ENCODE measurements at regions of chr5 and their contacts with region 1.

Region 1: DNA sequence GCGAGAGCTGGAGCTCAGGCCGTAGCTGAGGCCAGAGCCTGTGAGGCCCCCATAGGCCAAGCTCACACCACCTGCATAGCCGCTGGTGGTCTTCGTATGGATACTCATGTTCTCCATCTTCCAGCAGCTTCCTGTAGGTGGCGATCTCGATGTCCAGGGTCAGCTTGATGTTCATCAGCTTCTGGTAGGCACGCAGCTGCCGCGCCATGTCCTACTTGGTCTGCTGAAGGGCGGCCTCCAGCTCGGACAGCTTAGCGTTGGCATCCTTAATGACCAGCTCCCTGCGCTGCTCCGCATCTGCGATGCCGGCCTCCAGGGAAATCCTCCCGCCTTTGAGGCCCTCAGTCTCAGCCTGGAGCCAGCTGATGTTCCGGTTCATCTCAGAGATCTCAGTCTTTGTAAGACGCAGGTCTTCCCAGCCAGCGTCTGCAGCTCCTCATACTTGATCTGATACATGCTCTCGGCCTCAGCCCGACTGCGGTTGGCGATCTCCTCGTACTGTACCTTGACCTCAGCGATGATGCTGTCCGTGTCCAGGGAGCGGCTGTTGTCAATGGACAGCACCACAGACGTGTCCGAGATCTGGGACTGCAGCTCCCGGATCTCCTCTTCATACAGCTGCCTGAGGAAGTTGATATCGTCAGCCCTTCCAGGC is 172.1 kb downstream of the PPP2R2B start:
- DNase-seq: peak; percentile 66
- ATAC-seq: peak; percentile 91
- H3K4me3 Mint-ChIP-seq: no peak overlapping the region
- H3K27ac Mint-ChIP-seq: no peak overlapping the region
- H3K4me1 Mint-ChIP-seq: peaks cover 7% of the 10 kb centered on the region
- H3K27me3 Mint-ChIP-seq: no peaks in the 10 kb centered on the region
- CTCF ChIP-seq: no peak

Region 2: GRCh38 chr5:146751781-146752401 is 45.4 kb after region 1 on chr5:
- CTCF ChIA-PET with region 1: no interaction called
- POLR2A ChIA-PET with region 1: no interaction called
- DNase-seq: no peak
- ATAC-seq: no peak
- H3K4me3 Mint-ChIP-seq: no peak overlapping the region
- H3K27ac Mint-ChIP-seq: no peak overlapping the region
- H3K4me1 Mint-ChIP-seq: peaks cover 32% of the 10 kb centered on the region
- H3K27me3 Mint-ChIP-seq: no peaks in the 10 kb centered on the region
- CTCF ChIP-seq: no peak

Region 3: DNA sequence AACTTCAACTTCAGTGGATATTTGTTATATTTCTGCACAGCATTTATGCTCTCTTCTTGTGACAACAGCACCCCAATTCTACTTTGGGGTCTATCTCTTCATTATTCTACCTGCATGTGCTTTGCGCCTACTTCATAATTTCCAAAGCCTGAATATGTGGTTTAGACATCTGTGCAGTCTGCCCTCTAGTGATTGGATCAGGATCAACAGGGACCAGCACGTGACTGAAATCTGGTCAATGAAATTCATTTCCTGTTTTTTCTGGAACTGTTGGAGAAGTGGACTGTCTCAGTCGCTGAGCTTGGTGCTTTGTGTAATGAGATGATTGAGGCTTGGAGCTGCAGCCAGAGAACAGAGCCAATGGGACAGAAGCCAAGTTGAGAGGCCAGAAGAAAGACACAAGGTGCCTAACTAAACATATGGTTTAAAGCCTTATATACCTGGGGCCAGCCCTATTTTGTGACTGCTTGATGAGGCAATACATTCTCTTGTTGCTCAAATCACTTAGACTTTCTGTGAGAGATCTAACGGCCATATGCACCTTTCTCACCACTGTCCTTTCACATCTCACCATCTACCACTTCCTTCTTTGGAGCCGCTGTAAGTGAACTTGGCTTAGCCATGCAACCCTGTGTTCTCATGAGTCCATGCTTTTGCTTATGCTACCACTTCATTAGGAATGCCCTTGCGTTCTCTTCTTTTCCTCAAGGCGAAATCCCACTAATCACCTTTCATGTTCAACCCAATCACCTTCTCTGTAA is 240.9 kb after region 1 on chr5:
- CTCF ChIA-PET with region 1: interaction called, 15 read pairs
- POLR2A ChIA-PET with region 1: no interaction called
- DNase-seq: peak; percentile 26
- ATAC-seq: peak; percentile 82
- H3K4me3 Mint-ChIP-seq: no peak overlapping the region
- H3K27ac Mint-ChIP-seq: peak overlapping the region; percentile 5; the same call in 1 of the 2 replicates
- H3K4me1 Mint-ChIP-seq: peaks cover 17% of the 10 kb centered on the region
- H3K27me3 Mint-ChIP-seq: no peaks in the 10 kb centered on the region
- CTCF ChIP-seq: peak; percentile 27

Region 4: DNA sequence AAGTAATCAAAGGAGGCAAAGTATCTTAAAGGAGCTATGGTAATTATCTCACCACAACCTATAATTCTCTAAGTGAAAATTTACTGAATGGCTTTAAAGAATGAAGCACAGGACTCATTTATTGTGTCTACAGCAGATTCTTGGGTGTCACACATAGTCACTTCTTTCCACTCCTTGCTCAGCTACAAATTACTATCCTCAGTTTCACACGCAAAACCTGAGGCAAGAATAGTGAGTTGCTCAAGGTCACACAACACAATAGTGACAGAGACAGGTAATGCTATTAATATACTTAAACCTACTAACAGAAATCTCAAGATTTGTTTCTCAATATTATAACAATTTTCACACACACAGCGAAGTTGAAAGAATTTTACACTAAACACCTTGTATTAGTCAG is 407.5 kb after region 1 on chr5:
- CTCF ChIA-PET with region 1: no interaction called
- POLR2A ChIA-PET with region 1: no interaction called
- DNase-seq: no peak
- ATAC-seq: no peak
- H3K4me3 Mint-ChIP-seq: no peak overlapping the region
- H3K27ac Mint-ChIP-seq: no peak overlapping the region
- H3K4me1 Mint-ChIP-seq: peaks cover 19% of the 10 kb centered on the region
- H3K27me3 Mint-ChIP-seq: no peaks in the 10 kb centered on the region
- CTCF ChIP-seq: no peak